ENCODE measurements at regions of chr3 and their contacts with region 1.

Region 1: DNA sequence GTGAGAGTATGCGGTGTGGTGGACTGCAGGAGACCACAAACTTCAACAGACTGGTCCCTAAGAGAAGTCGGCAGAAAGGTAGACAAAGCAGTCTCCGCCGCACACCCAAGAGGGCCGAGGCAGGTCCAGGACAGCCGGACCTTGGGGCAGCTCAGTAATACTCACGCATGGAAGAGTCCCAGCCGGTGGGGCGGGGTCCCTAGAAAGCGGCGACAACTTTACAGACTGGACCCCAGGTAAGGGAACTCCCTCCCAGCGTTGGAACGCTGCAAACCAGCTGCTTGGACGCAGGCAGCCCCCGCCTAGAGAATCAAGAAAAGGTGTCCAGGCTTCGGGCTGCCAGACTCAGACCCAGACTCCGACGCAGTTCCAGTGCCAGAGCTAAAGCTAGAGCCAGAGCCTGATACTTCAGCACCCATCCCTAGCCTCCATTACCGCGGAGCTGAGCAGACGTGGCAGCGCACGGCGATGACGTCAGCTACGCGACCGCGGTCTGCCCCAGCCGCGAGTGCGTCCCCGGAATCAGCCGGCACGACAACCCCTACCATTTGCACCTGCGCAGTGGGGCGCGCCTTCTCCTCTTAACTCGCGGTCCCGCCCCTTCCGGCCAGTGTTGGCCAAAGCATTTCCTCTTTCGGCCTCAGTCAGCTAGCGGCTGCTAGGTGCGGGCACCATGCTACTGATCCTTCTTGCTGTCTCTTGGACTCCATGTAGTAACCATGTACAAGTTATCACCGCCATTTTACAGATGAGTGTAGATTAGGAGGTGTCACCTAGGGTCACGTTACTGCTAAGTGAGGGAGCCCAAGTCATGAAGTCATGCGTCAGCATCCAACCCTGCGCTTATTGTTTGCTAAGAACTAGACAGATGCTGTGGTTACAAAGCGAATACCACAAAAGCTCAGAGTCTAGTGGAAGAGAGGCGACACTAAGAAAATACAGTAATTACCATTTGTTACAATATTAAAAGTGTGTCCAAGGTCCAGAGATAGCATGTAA is at the start of gene TMEM39A:
- DNase-seq: peak; percentile 99
- ATAC-seq: peak; percentile 92
- H3K4me3 Mint-ChIP-seq: peak within 1 kb of the TSS; percentile 97
- H3K27ac Mint-ChIP-seq: peak within 1 kb of the TSS; percentile 99
- H3K4me1 Mint-ChIP-seq: peaks cover 45% of the 10 kb centered on the region
- H3K27me3 Mint-ChIP-seq: no peaks in the 10 kb centered on the region
- total RNA-seq, gene TMEM39A: 30.5 to 31.2 TPM

Region 2: DNA sequence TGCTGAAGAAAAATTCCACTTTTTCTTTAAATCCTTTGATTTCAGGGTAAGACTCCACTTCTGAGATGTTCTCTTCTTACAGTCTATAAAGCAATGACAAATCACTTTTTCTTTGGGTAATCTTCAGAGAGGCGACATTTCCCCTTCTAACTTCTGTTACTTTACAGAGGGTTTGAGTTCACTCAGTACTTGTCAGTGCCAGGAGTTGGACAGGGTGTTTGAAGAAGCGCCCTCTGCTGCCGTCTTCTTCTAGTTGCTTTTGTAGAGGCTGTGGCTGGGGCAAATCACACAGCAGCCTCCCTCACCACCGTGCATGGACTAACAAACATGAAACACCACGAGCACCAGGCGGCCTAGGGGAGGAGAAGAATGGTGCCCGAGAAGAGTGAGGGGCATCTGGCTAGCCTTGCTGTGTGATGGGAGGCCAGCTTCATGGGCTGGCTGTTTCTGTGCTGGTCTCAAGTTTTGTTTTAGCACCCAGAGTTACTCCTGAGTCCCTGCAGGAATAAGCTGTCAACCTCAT is 96.0 kb after region 1 on chr3 and contains the start of gene CD80:
- CTCF ChIA-PET with region 1: no interaction called
- POLR2A ChIA-PET with region 1: interaction called, 11 read pairs
- DNase-seq: peak; percentile 90
- ATAC-seq: peak; percentile 88
- H3K4me3 Mint-ChIP-seq: peak within 1 kb of the TSS; percentile 78
- H3K27ac Mint-ChIP-seq: peak within 1 kb of the TSS; percentile 78
- H3K4me1 Mint-ChIP-seq: peaks cover 66% of the 10 kb centered on the region
- H3K27me3 Mint-ChIP-seq: no peaks in the 10 kb centered on the region
- total RNA-seq, gene CD80: 19.1 to 20.2 TPM

Region 3: GRCh38 chr3:119618905-119619493 is 155.5 kb after region 1 on chr3:
- CTCF ChIA-PET with region 1: no interaction called
- POLR2A ChIA-PET with region 1: no interaction called
- DNase-seq: no peak
- ATAC-seq: no peak
- H3K4me3 Mint-ChIP-seq: no peak overlapping the region
- H3K27ac Mint-ChIP-seq: no peak overlapping the region
- H3K4me1 Mint-ChIP-seq: no peaks in the 10 kb centered on the region
- H3K27me3 Mint-ChIP-seq: peaks cover 15% of the 10 kb centered on the region